Activated naive CD4-positive, alpha-beta T cell treated with anti-CD3 and anti-CD28 coated beads for 36 hours (primary cell): ENCODE measurements at regions of chr11 and their contacts with region 1.

Region 1: GRCh38 chr11:81497202-81497804 is 1236.4 kb downstream of the FAM181B start:
- DNase-seq: peak; percentile 22
- H3K4me3 Mint-ChIP-seq: no peak overlapping the region
- H3K27ac Mint-ChIP-seq: no peak overlapping the region
- H3K4me1 Mint-ChIP-seq: no peaks in the 10 kb centered on the region
- H3K27me3 Mint-ChIP-seq: peaks cover 13% of the 10 kb centered on the region

Region 2: GRCh38 chr11:81033779-81034540 is 463.3 kb before region 1 on chr11:
- CTCF ChIA-PET with region 1: no interaction called
- intact Hi-C with region 1: no loop called
- DNase-seq: no peak
- H3K4me3 Mint-ChIP-seq: no peak overlapping the region
- H3K27ac Mint-ChIP-seq: no peak overlapping the region
- H3K4me1 Mint-ChIP-seq: no peaks in the 10 kb centered on the region
- H3K27me3 Mint-ChIP-seq: no peaks in the 10 kb centered on the region

Region 3: GRCh38 chr11:81246941-81247340 is 250.4 kb before region 1 on chr11:
- CTCF ChIA-PET with region 1: no interaction called
- intact Hi-C with region 1: loop called (anchors 10 kb)
- DNase-seq: no peak
- H3K4me3 Mint-ChIP-seq: no peak overlapping the region
- H3K27ac Mint-ChIP-seq: no peak overlapping the region
- H3K4me1 Mint-ChIP-seq: no peaks in the 10 kb centered on the region
- H3K27me3 Mint-ChIP-seq: no peaks in the 10 kb centered on the region